Activated B cell treated with CpG ODN at 0.5 μM for 24 hours (primary cell): ENCODE measurements at regions of chr17 and their contacts with region 1.

Region 1: GRCh38 chr17:63406689-63407330 is 39.3 kb downstream of the CYB561 start:
- DNase-seq: no peak
- ATAC-seq: peak; percentile 94
- H3K4me3 Mint-ChIP-seq: no peak overlapping the region
- H3K27ac Mint-ChIP-seq: no peak overlapping the region
- H3K4me1 Mint-ChIP-seq: peaks cover 2% of the 10 kb centered on the region
- H3K27me3 Mint-ChIP-seq: no peaks in the 10 kb centered on the region
- CTCF ChIP-seq: peak; percentile 57

Region 2: DNA sequence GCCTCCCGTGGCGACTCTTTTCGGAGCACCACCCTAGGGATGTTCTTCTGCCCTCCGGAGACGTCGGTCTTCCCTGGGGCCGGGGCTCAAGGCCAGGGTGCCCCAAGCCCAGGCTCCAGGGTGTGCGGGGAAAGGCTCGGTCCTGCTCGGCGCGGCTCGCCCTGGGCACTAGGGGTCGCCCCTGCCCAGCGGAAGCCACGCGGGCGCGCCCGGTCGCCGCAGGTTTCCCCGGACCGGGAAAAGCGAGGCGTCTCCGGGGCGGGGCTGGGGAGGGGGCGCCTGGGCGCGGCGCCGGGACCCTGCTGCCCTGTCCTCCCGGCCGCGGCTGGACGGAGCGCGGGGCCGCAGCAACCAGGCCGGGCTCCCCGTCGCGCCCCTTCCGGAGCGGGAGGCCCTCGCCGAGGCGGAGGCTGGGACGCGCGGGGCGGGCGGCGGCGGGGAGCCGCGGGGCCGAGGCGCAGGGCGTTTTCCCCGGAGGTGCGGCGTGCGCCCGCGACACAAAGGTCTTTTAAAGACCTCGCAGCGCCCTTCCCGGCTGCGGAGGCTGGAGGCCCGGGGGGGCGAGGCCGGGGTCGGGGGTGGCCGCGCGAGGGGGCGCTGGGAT is 702.9 kb before region 1 on chr17:
- CTCF ChIA-PET with region 1: interaction called, 6 read pairs
- POLR2A ChIA-PET with region 1: no interaction called
- intact Hi-C with region 1: loop called (anchors 1 kb)
- DNase-seq: peak; percentile 81
- ATAC-seq: peak; percentile 95
- H3K4me3 Mint-ChIP-seq: peak overlapping the region; percentile 60
- H3K27ac Mint-ChIP-seq: no peak overlapping the region
- H3K4me1 Mint-ChIP-seq: peaks cover 10% of the 10 kb centered on the region
- H3K27me3 Mint-ChIP-seq: peaks cover 11% of the 10 kb centered on the region
- CTCF ChIP-seq: no peak

Region 3: GRCh38 chr17:62995377-62995885 is 411.4 kb before region 1 on chr17:
- CTCF ChIA-PET with region 1: interaction called, 27 read pairs
- POLR2A ChIA-PET with region 1: no interaction called
- intact Hi-C with region 1: loop called (anchors 1 kb)
- DNase-seq: no peak
- ATAC-seq: no peak
- H3K4me3 Mint-ChIP-seq: no peak overlapping the region
- H3K27ac Mint-ChIP-seq: no peak overlapping the region
- H3K4me1 Mint-ChIP-seq: peaks cover 9% of the 10 kb centered on the region
- H3K27me3 Mint-ChIP-seq: no peaks in the 10 kb centered on the region
- CTCF ChIP-seq: no peak

Region 4: GRCh38 chr17:63113183-63113582 is 293.6 kb before region 1 on chr17:
- CTCF ChIA-PET with region 1: interaction called, 25 read pairs
- POLR2A ChIA-PET with region 1: no interaction called
- intact Hi-C with region 1: loop called (anchors 1 kb)
- DNase-seq: no peak
- ATAC-seq: no peak
- H3K4me3 Mint-ChIP-seq: no peak overlapping the region
- H3K27ac Mint-ChIP-seq: no peak overlapping the region
- H3K4me1 Mint-ChIP-seq: no peaks in the 10 kb centered on the region
- H3K27me3 Mint-ChIP-seq: peaks cover 2% of the 10 kb centered on the region
- CTCF ChIP-seq: no peak

Region 5: DNA sequence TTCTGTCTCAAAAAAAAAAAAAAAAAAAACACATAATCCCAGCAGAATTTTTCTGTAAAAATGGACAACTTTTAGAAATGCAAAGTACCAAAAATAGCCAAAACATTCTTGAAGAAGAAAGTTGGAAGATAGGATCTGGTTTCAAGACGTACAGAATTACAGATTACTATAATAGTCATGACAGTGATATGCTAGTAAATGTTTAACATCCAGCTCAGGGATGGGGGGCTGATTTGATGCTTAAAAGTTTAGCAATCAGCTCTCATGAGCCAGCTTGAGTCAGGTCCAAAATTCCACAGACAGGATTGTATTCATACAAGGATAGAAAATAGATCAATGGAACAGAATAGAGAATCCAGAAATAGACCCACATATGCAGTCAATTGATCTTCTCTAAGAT is 61.2 kb before region 1 on chr17:
- CTCF ChIA-PET with region 1: no interaction called
- POLR2A ChIA-PET with region 1: no interaction called
- intact Hi-C with region 1: no loop called
- DNase-seq: no peak
- ATAC-seq: no peak
- H3K4me3 Mint-ChIP-seq: no peak overlapping the region
- H3K27ac Mint-ChIP-seq: no peak overlapping the region
- H3K4me1 Mint-ChIP-seq: no peaks in the 10 kb centered on the region
- H3K27me3 Mint-ChIP-seq: no peaks in the 10 kb centered on the region
- CTCF ChIP-seq: no peak

Region 6: GRCh38 chr17:63395075-63395805 is 11.6 kb before region 1 on chr17:
- CTCF ChIA-PET with region 1: interaction called, 15 read pairs
- POLR2A ChIA-PET with region 1: no interaction called
- intact Hi-C with region 1: no loop called
- DNase-seq: no peak
- ATAC-seq: no peak
- H3K4me3 Mint-ChIP-seq: no peak overlapping the region
- H3K27ac Mint-ChIP-seq: no peak overlapping the region
- H3K4me1 Mint-ChIP-seq: peaks cover 14% of the 10 kb centered on the region
- H3K27me3 Mint-ChIP-seq: no peaks in the 10 kb centered on the region
- CTCF ChIP-seq: no peak

Region 7: DNA sequence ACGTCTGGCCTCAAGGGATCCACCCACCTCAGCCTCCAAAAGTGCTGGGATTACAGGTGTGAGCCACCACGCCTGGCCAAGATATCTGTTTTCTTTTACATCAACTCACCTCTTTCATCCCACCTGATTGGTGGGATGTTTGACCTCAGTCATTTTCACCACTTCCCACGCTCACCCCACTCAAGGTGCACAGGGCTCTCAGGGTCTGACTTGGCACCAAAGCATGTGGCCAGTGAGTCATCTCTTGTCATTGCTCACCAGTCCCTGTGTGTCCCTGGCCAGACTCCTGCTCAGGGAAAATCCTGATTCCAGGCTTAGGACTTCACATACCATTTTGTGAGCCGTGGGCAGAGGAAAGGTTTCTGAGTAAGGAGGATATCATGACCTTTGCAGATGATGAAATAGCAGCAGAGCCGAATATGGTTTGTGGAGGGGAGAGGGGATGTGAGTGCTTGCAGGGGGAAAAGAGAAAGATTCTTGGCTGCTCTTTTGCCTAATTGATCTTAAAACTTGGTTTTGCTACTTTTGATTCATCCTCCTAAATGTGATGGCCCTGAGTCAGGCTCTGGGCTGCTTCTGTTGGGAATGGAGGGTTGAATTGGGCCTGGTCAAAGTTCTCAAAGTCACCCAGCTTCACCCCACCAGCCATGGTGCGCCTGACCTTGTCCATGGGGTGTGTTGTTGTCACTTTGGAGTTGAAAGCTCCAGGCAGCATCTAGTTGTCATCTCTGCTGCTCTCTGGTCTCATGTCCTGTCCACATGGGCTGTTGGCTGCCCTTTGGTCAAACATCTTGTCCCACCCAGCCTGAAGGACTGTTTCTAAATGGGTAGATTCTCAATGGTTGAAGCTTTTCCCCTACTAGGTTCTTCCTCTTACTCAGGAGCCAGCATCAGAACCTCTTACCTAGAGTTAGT is 110.4 kb after region 1 on chr17:
- CTCF ChIA-PET with region 1: no interaction called
- POLR2A ChIA-PET with region 1: no interaction called
- intact Hi-C with region 1: no loop called
- DNase-seq: no peak
- ATAC-seq: no peak
- H3K4me3 Mint-ChIP-seq: no peak overlapping the region
- H3K27ac Mint-ChIP-seq: no peak overlapping the region
- H3K4me1 Mint-ChIP-seq: no peaks in the 10 kb centered on the region
- H3K27me3 Mint-ChIP-seq: peaks cover 22% of the 10 kb centered on the region
- CTCF ChIP-seq: no peak